Psoas muscle (tissue), 8 donors: ENCODE measurements at regions of chr5 and their contacts with region 1.

Region 1: GRCh38 chr5:55691265-55692105 is 20.6 kb downstream of the SLC38A9 start:
- DNase-seq: no peak
- ATAC-seq: peak; percentile 75 to 92 (median 81)
- H3K4me3 ChIP-seq: peak overlapping the region; percentile 35
- H3K27ac ChIP-seq: no peak overlapping the region
- H3K4me1 ChIP-seq: peaks cover 20% of the 10 kb centered on the region
- H3K27me3 ChIP-seq: no peaks in the 10 kb centered on the region
- CTCF ChIP-seq: peak; percentile 77

Region 2: GRCh38 chr5:55324815-55325418 is 366.6 kb before region 1 on chr5:
- intact Hi-C with region 1: loop called in 1 of 2 experiments (anchors 5 kb)
- DNase-seq: no peak
- ATAC-seq: peak; percentile 72 to 84 (median 82)
- H3K4me3 ChIP-seq: no peak overlapping the region
- H3K27ac ChIP-seq: peak overlapping the region; percentile 1
- H3K4me1 ChIP-seq: peaks cover 15% of the 10 kb centered on the region
- H3K27me3 ChIP-seq: no peaks in the 10 kb centered on the region
- CTCF ChIP-seq: peak; percentile 70

Region 3: GRCh38 chr5:55344392-55344992 is 347.0 kb before region 1 on chr5:
- intact Hi-C with region 1: loop called (anchors 2 to 5 kb)
- DNase-seq: peak in 1 of 2 donors; percentile 31
- ATAC-seq: peak in 2 of 4 donors; percentile 57 to 73
- H3K4me3 ChIP-seq: no peak overlapping the region
- H3K27ac ChIP-seq: no peak overlapping the region
- H3K4me1 ChIP-seq: no peaks in the 10 kb centered on the region
- H3K27me3 ChIP-seq: no peaks in the 10 kb centered on the region
- CTCF ChIP-seq: peak; percentile 91

Region 4: DNA sequence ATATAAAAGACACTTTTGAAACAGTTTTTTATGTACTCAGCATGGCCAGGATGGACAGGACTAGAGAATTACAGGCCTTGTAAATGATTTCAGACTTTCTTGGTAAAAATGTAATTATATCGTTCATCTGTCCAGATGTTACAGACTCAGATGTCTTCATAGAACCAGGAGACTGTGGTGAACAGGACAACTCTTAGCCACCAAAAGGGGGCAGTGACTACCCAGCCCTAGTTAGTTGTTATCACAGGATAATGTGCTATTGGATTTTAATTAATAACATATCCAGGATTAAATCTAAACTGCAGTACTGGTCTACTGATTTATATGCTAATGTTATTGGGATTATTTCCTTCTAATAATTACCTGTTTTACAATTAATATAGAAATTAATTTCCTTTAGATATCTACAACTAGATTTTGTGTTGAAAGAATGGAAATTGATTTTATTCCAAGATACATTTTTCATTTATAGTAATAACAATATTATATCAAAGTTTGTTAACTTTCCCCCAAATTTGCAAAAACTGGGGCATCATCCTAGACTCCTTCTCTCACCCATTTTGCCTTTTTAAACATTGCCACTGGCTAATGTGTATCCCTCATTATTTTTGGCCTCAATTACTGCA is 284.3 kb before region 1 on chr5:
- intact Hi-C with region 1: loop called (anchors 1 to 5 kb)
- DNase-seq: no peak
- ATAC-seq: peak in 3 of 4 donors; percentile 71 to 91 (median 87)
- H3K4me3 ChIP-seq: no peak overlapping the region
- H3K27ac ChIP-seq: no peak overlapping the region
- H3K4me1 ChIP-seq: no peaks in the 10 kb centered on the region
- H3K27me3 ChIP-seq: no peaks in the 10 kb centered on the region
- CTCF ChIP-seq: peak; percentile 69

Region 5: DNA sequence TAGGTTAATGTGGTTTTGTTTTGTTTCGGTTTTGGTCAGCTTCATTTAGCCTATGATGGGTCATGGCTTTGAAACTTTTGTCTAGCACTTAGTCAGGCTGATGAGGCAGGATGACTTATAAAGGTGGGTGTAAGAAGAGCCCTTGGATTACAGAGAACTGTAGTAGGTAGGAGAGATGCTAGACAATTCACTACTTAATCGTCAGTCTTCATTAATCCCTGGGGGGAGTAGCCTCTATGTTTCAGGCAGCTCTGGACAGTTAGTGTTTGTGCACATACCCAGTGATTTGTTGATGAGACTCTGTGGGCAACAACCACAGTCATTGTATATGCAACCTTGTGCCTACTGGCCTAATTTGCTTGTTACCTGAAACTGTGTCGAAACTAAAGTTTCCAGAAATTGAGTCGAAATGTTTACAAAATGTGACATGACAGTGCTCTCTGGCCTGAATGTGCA is 270.4 kb before region 1 on chr5:
- intact Hi-C with region 1: loop called in 1 of 2 experiments (anchors 5 kb)
- DNase-seq: no peak
- ATAC-seq: peak in 3 of 4 donors; percentile 41 to 46 (median 45)
- H3K4me3 ChIP-seq: no peak overlapping the region
- H3K27ac ChIP-seq: no peak overlapping the region
- H3K4me1 ChIP-seq: peaks cover 39% of the 10 kb centered on the region
- H3K27me3 ChIP-seq: no peaks in the 10 kb centered on the region
- CTCF ChIP-seq: no peak

Region 6: DNA sequence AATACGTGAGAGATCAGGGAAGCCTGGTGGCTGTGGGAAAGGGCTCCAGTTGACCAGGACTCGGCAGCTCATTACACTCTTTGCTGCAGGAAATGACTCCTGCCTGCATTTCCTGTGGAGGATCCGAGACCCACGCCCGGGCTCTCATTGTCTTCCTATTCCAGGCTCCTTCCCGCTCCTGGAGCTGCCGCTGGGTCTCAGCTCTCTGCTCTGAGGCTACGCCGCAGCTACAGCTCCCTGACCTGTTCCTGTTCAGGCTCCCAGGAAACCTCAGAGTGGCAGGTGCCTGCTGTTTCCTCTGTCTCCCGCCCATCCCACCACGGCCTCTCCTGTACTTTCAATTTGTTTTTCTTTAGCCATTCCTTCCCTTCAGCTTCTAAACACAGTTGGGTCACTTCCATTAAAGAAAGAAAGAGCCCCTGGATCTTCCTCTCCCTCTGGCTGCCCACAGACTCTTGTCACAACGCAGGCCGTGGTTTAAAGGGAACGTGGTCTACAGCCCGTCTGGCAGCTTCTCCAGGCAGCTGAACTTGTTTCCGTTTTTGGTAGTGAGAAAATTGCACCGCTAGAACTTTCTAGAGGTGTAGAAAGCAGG is 231.8 kb after region 1 on chr5:
- intact Hi-C with region 1: no loop called
- DNase-seq: no peak
- ATAC-seq: no peak
- H3K4me3 ChIP-seq: peak overlapping the region; percentile 49
- H3K27ac ChIP-seq: no peak overlapping the region
- H3K4me1 ChIP-seq: no peaks in the 10 kb centered on the region
- H3K27me3 ChIP-seq: peaks cover 0 to 2% (median 0%) of the 10 kb centered on the region in 3 donors
- CTCF ChIP-seq: no peak